Activated naive CD4-positive, alpha-beta T cell treated with anti-CD3 and anti-CD28 coated beads for 36 hours (primary cell): ENCODE measurements at regions of chr10 and their contacts with region 1.

Region 1: DNA sequence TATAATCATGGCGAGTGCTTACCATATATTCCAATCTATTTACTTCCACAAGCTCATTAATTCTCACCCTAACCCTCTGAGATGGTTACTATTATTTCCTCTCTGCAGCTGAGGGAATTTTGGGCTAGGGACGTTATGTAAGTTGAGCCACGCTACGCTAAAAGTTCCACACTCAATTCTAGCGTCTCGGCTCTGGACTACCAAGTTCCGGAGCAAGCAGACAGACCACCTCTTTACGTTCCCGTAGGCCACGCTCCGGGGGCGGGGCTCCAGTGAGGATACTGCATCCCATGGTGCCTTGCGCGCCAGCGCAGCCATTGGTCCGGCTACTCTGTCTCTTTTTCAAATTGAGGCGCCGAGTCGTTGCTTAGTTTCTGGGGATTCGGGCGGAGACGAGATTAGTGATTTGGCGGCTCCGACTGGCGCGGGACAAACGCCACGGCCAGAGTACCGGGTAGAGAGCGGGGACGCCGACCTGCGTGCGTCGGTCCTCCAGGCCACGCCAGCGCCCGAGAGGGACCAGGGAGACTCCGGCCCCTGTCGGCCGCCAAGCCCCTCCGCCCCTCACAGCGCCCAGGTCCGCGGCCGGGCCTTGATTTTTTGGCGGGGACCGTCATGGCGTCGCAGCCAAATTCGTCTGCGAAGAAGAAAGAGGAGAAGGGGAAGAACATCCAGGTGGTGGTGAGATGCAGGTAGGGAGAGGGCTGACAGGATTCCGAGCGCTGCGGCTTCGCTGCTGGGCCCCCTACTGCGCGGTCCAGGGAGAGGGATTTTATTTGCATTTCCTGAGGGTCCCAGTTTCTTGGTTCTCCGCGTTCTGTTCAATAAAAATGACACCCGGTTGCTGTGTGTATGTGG is at the start of gene KIF11:
- DNase-seq: peak; percentile 99
- H3K4me3 Mint-ChIP-seq: peak within 1 kb of the TSS; percentile 95
- H3K27ac Mint-ChIP-seq: peak within 1 kb of the TSS; percentile 99
- H3K4me1 Mint-ChIP-seq: peaks cover 23% of the 10 kb centered on the region
- H3K27me3 Mint-ChIP-seq: no peaks in the 10 kb centered on the region
- total RNA-seq, gene KIF11: 43.2 to 43.4 TPM

Region 2: DNA sequence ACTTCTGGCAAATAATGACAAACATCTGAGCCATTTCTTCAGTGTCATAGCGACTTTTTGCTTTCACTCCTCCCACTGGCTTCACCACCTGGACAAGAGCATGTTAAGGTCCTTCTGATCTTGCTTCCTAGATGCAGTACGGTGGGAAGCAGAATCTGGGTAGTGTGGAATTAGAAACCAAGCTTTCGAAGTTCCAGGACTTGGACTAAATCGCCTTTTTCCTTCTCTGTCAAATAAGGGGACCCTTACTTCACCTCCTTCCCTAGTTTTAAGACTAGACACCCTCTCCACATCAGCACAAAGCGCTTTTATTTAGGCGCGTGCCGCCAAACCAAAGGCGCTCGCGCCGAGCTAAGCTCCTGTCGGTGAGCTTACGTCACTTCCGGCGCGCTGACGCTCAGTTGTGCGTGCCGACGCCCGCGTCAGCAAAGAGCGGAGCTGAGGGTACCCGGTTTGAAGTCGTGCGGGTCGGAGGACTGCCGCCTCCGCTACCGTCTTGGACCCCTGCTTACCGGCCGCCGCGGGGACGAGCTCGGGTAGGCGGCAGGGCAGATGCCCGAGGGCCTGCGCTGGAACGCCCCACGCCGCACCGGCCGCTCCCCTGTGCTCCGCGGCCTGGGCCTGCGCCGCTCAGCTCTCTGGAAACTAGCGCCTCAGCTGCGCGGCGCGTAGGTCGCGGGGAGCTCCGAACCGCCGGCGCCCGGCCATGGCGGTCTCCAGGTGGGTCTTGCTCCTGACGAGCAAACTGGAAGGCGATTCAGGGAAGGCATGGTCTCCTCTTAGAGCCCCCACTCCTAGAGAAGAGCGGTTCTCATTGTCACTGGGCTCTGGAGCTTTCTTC is 669.4 kb before region 1 on chr10 and contains the start of gene BTAF1:
- CTCF ChIA-PET with region 1: no interaction called
- intact Hi-C with region 1: loop called (anchors 5 kb)
- DNase-seq: peak; percentile 93
- H3K4me3 Mint-ChIP-seq: peak within 1 kb of the TSS; percentile 86
- H3K27ac Mint-ChIP-seq: peak within 1 kb of the TSS; percentile 99
- H3K4me1 Mint-ChIP-seq: peaks cover 35% of the 10 kb centered on the region
- H3K27me3 Mint-ChIP-seq: no peaks in the 10 kb centered on the region
- total RNA-seq, gene BTAF1: 42.6 to 43.6 TPM

Region 3: GRCh38 chr10:92517034-92517655 is 75.8 kb before region 1 on chr10:
- CTCF ChIA-PET with region 1: interaction called, 5 read pairs
- intact Hi-C with region 1: loop called (anchors 1 kb)
- DNase-seq: peak; percentile 78
- H3K4me3 Mint-ChIP-seq: no peak overlapping the region
- H3K27ac Mint-ChIP-seq: no peak overlapping the region
- H3K4me1 Mint-ChIP-seq: peaks cover 6% of the 10 kb centered on the region
- H3K27me3 Mint-ChIP-seq: no peaks in the 10 kb centered on the region

Region 4: DNA sequence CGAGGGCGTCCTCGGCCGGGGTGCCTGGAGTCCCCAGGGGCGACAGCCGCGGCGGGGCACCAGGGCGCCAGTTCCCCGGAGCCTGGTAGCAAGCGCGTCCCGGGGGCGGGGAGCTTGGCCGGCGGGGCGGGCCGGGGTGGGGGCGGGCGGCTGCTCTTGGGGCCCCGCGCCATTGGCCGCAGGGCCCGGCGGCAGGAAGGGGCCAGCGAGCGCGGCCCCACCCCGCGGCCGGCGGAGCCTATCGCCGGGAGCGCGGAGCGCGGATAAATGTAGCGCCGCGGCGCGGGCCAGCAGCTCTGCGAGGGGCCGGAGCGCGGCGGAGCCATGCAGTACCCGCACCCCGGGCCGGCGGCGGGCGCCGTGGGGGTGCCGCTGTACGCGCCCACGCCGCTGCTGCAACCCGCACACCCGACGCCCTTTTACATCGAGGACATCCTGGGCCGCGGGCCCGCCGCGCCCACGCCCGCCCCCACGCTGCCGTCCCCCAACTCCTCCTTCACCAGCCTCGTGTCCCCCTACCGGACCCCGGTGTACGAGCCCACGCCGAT is 96.7 kb after region 1 on chr10 and contains the start of gene HHEX:
- CTCF ChIA-PET with region 1: no interaction called
- intact Hi-C with region 1: loop called (anchors 1 kb)
- DNase-seq: no peak
- H3K4me3 Mint-ChIP-seq: peak within 1 kb of the TSS; percentile 58
- H3K27ac Mint-ChIP-seq: no peak within 1 kb of the TSS
- H3K4me1 Mint-ChIP-seq: peaks cover 19% of the 10 kb centered on the region
- H3K27me3 Mint-ChIP-seq: peaks cover 64% of the 10 kb centered on the region
- total RNA-seq, gene HHEX: 0.15 TPM in 1 of 2 experiments, not detected in the other

Region 5: GRCh38 chr10:93496322-93497041 is 903.5 kb after region 1 on chr10 and contains the start of gene CEP55:
- CTCF ChIA-PET with region 1: no interaction called
- intact Hi-C with region 1: loop called (anchors 1 kb)
- DNase-seq: peak; percentile 96
- H3K4me3 Mint-ChIP-seq: peak within 1 kb of the TSS; percentile 90
- H3K27ac Mint-ChIP-seq: peak within 1 kb of the TSS; percentile 63
- H3K4me1 Mint-ChIP-seq: peaks cover 18% of the 10 kb centered on the region
- H3K27me3 Mint-ChIP-seq: peaks cover 7% of the 10 kb centered on the region
- total RNA-seq, gene CEP55: 64.4 to 68.2 TPM